Activated CD4-positive, alpha-beta memory T cell treated with anti-CD3 and anti-CD28 coated beads for 36 hours (primary cell): ENCODE measurements at regions of chr6 and their contacts with region 1.

Region 1: DNA sequence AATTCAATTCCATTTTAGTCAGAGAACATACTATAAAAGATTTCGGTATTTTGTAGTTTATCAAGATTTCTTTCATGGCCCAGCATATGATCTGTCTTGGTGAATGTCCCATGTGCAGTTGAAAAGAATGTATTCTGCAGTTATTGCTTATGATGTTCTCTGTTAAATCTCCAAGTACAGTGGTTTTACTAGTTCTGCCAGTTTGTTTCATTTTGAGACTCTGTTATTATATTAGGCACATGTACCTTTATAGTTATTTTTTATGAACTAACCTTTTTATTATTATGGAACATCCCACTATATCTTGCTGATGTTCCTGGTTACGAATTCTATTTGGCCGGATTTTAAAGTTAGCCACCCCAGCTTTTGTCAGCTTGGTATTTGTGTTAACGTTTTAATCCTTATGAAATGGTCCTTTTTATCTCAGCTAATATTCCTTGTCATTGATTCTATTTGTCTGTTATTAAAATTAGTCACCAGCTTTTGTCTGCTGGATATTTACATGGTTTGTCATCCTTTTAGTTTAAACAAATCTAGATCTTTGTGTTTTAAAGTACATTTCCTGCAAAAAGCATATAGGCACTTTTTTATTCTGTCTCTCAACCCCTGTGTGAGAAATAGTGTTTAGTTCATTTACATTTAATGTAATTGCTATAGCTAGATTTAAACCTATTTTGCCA is 48.9 kb downstream of the VTA1 start:
- DNase-seq: no peak
- H3K4me3 Mint-ChIP-seq: no peak overlapping the region
- H3K27ac Mint-ChIP-seq: no peak overlapping the region
- H3K4me1 Mint-ChIP-seq: peaks cover 29% of the 10 kb centered on the region
- H3K27me3 Mint-ChIP-seq: no peaks in the 10 kb centered on the region

Region 2: GRCh38 chr6:142207265-142207877 is 11.4 kb after region 1 on chr6:
- CTCF ChIA-PET with region 1: interaction called, 31 read pairs
- POLR2A ChIA-PET with region 1: no interaction called
- intact Hi-C with region 1: no loop called
- DNase-seq: peak; percentile 49
- H3K4me3 Mint-ChIP-seq: no peak overlapping the region
- H3K27ac Mint-ChIP-seq: no peak overlapping the region
- H3K4me1 Mint-ChIP-seq: no peaks in the 10 kb centered on the region
- H3K27me3 Mint-ChIP-seq: no peaks in the 10 kb centered on the region

Region 3: GRCh38 chr6:142275251-142276006 is 79.4 kb after region 1 on chr6:
- CTCF ChIA-PET with region 1: no interaction called
- POLR2A ChIA-PET with region 1: no interaction called
- intact Hi-C with region 1: no loop called
- DNase-seq: no peak
- H3K4me3 Mint-ChIP-seq: no peak overlapping the region
- H3K27ac Mint-ChIP-seq: no peak overlapping the region
- H3K4me1 Mint-ChIP-seq: no peaks in the 10 kb centered on the region
- H3K27me3 Mint-ChIP-seq: no peaks in the 10 kb centered on the region